Mammary epithelial cell (primary cell): ENCODE measurements at regions of chr15 and their contacts with region 1.

Region 1: GRCh38 chr15:66851226-66852071 is 149.4 kb downstream of the SMAD6 start:
- DNase-seq: peak; percentile 28
- H3K4me3 ChIP-seq: no peak overlapping the region
- H3K27ac ChIP-seq: no peak overlapping the region
- H3K4me1 ChIP-seq: peaks cover 3% of the 10 kb centered on the region
- H3K27me3 ChIP-seq: no peaks in the 10 kb centered on the region
- CTCF ChIP-seq: peak; percentile 79 to 95

Region 2: GRCh38 chr15:66497502-66498455 is 353.7 kb before region 1 on chr15 and contains the start of gene SNAPC5:
- CTCF ChIA-PET with region 1: no interaction called
- dilution Hi-C with region 1: no loop called
- in situ Hi-C with region 1: no loop called
- intact Hi-C with region 1: loop called (anchors 2 kb)
- DNase-seq: peak; percentile 93
- H3K4me3 ChIP-seq: peak within 1 kb of the TSS; percentile 65 to 84 (median 66)
- H3K27ac ChIP-seq: peak within 1 kb of the TSS; percentile 73
- H3K4me1 ChIP-seq: peaks cover 18% of the 10 kb centered on the region
- H3K27me3 ChIP-seq: no peaks in the 10 kb centered on the region
- CTCF ChIP-seq: peak; percentile 88 to 96
- total RNA-seq, gene SNAPC5: 11.2 to 21.3 TPM

Region 3: DNA sequence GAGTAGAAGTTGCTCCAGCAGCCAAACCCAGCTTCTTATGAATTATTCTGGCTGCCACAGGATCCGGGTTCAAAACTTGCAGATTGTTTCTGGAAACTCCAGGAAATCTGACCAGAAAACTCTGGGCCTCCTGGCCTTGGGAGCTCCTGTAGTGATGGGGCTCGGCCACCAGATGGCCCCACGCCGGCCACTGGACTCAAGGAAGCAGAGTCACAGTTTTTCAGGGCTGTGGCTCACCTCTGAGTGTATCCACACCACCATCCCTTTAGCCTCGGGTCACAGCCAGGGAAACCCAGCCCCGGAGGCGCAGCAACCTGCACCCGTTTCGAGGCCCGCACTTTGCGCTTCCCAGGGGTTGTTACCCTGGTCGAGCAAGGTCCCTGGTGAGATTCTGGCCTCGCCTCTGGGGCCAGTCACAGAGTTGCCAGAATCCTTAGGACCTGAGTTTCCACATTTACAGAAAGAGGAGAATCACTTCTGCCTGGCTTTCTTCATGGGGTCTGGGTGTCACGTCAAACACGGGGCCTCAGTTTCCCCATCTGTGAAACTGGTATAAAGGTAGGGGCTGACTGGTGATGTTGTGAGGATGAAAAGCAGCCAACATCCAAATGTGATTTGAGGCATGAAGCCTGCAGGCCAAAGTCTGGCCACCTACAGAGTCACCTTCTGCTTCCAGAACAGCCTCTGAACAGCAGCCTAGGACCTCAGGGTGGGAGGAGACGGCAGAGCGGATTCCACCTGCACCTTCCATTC is 232.1 kb before region 1 on chr15:
- CTCF ChIA-PET with region 1: interaction called, 3 read pairs
- dilution Hi-C with region 1: loop called (anchors 5 kb)
- in situ Hi-C with region 1: loop called in 1 of 2 experiments (anchors 10 kb)
- intact Hi-C with region 1: loop called (anchors 1 kb)
- DNase-seq: peak; percentile 57
- H3K4me3 ChIP-seq: no peak overlapping the region
- H3K27ac ChIP-seq: no peak overlapping the region
- H3K4me1 ChIP-seq: peaks cover 4% of the 10 kb centered on the region
- H3K27me3 ChIP-seq: peaks cover 11% of the 10 kb centered on the region
- CTCF ChIP-seq: peak; percentile 77 to 92

Region 4: GRCh38 chr15:66774001-66774814 is 77.2 kb before region 1 on chr15:
- CTCF ChIA-PET with region 1: no interaction called
- dilution Hi-C with region 1: loop called (anchors 5 kb)
- in situ Hi-C with region 1: no loop called
- intact Hi-C with region 1: loop called (anchors 1 kb)
- DNase-seq: peak; percentile 59
- H3K4me3 ChIP-seq: no peak overlapping the region
- H3K27ac ChIP-seq: no peak overlapping the region
- H3K4me1 ChIP-seq: peaks cover under 1% of the 10 kb centered on the region
- H3K27me3 ChIP-seq: no peaks in the 10 kb centered on the region
- CTCF ChIP-seq: peak; percentile 94 to 99

Region 5: DNA sequence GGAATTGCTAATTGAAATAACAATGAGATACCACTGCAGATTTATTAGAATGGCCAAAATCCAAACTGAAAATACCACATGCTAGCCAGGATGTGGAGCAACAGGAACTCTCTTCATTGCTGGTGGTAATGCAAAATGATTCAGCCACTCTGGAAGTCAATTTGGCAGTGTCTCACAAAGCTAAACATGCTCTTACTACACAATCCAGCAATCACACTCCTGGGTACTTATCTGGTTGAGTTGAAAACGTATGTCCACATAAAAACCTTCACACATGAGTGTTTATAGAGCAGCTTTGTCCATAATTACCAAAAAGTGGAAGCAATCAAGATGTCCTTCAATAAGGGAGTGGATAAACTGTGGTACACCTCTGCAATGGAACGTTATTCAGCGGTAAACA is 36.1 kb before region 1 on chr15:
- CTCF ChIA-PET with region 1: no interaction called
- dilution Hi-C with region 1: no loop called
- in situ Hi-C with region 1: no loop called
- intact Hi-C with region 1: loop called (anchors 1 kb)
- DNase-seq: peak; percentile 77
- H3K4me3 ChIP-seq: no peak overlapping the region
- H3K27ac ChIP-seq: no peak overlapping the region
- H3K4me1 ChIP-seq: peaks cover 11% of the 10 kb centered on the region
- H3K27me3 ChIP-seq: no peaks in the 10 kb centered on the region
- CTCF ChIP-seq: peak in 1 of 2 donors; percentile 29

Region 6: GRCh38 chr15:67150028-67150860 is 298.8 kb after region 1 on chr15:
- CTCF ChIA-PET with region 1: no interaction called
- dilution Hi-C with region 1: no loop called
- in situ Hi-C with region 1: no loop called
- intact Hi-C with region 1: no loop called
- DNase-seq: peak; percentile 97
- H3K4me3 ChIP-seq: peak overlapping the region in 2 of 3 experiments; percentile 0 to 23
- H3K27ac ChIP-seq: peak overlapping the region; percentile 92
- H3K4me1 ChIP-seq: peaks cover 51% of the 10 kb centered on the region
- H3K27me3 ChIP-seq: no peaks in the 10 kb centered on the region
- CTCF ChIP-seq: no peak